ENCODE measurements at regions of chr12 and their contacts with region 1.

Region 1: DNA sequence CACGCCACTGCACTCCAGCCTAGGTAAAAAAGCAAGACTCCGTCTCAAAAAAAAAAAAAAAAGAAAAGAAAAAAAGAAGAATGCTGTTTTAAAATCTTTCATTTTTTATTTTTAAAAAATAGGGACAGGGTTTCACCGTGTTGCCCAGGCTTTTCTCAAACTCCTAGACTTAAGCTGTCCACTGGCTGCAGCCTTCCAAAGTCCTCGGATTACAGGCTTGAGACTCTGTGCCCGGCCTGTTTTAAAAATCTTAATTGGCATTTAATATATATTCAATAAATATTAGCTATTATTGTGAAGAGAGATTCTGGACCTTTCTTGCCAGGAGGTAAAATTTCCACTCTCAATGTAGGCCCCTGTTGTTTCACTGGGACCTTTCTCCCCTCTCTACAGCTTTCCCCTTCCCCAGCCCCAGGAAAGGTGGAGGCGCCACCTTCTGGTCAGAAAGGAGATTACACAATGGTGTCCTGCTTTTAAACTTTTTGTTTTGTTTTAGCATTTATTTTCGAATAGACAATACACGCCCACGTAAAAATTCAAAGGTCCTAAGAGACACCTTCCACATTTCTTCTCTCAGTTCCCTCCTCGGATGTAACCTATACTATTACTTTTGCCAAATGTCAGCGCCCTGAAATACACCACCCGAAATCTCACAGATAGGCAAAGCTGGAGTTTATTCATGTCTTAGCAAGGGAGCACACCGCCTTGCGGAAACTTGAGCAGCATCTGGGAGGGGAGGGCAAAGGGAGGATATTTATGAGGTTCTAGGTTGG is 23.8 kb upstream of the PHC1 start:
- DNase-seq: peak; percentile 70
- H3K4me3 Mint-ChIP-seq: peak overlapping the region; percentile 72
- H3K27ac Mint-ChIP-seq: no peak overlapping the region
- H3K4me1 Mint-ChIP-seq: peaks cover 4% of the 10 kb centered on the region
- H3K27me3 Mint-ChIP-seq: peaks cover 23% of the 10 kb centered on the region

Region 2: GRCh38 chr12:8544295-8544694 is 346.2 kb before region 1 on chr12:
- CTCF ChIA-PET with region 1: interaction called, 19 read pairs
- DNase-seq: peak; percentile 85
- H3K4me3 Mint-ChIP-seq: no peak overlapping the region
- H3K27ac Mint-ChIP-seq: no peak overlapping the region
- H3K4me1 Mint-ChIP-seq: peaks cover 10% of the 10 kb centered on the region
- H3K27me3 Mint-ChIP-seq: peaks cover 30% of the 10 kb centered on the region

Region 3: GRCh38 chr12:8658346-8658745 is 232.2 kb before region 1 on chr12:
- CTCF ChIA-PET with region 1: interaction called, 20 read pairs
- DNase-seq: no peak
- H3K4me3 Mint-ChIP-seq: no peak overlapping the region
- H3K27ac Mint-ChIP-seq: no peak overlapping the region
- H3K4me1 Mint-ChIP-seq: no peaks in the 10 kb centered on the region
- H3K27me3 Mint-ChIP-seq: peaks cover 29% of the 10 kb centered on the region

Region 4: DNA sequence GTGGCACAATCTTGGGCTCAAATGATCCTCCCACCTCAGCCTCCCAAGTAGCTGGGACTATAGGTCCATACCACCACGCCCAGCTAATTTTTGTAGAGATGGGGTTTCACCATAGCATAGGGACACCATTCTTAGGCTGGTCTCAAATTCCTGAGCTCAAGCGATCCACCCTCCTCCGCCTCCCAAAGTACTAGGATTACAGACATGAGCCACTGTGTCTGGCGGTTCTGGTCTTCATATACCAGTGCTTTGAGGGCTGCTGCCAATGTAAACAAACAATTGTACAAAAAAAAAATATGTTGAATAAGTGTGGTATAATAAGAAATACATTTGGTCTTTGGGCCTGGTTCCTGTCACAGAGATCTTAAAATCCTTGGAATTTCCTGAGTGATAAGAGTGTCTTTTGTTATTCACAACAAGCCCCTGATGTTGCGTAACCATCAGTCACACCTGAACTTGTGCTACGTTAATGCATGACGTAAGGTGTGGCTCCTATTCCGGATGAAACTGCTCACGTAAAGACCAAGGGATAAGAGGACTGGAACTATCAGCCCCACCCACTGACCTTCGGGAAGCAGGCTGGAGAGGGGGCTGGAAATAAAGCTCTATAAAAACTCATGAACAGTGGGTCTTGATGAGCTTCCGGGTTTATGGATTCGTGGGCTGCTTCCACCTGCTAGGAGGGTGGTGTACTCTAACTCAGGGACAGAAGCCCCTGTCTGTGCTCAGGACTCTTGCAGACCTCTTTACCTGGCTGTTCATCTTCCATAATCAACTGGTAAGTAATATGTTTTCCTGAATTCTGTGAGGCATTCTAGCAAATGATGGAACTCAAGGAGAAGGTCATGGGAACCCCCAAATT is 209.2 kb before region 1 on chr12:
- CTCF ChIA-PET with region 1: interaction called, 26 read pairs
- DNase-seq: no peak
- H3K4me3 Mint-ChIP-seq: no peak overlapping the region
- H3K27ac Mint-ChIP-seq: no peak overlapping the region
- H3K4me1 Mint-ChIP-seq: peaks cover 4% of the 10 kb centered on the region
- H3K27me3 Mint-ChIP-seq: peaks cover 13% of the 10 kb centered on the region

Region 5: GRCh38 chr12:8860165-8860961 is 30.1 kb before region 1 on chr12:
- CTCF ChIA-PET with region 1: interaction called, 14 read pairs
- DNase-seq: peak; percentile 51
- H3K4me3 Mint-ChIP-seq: no peak overlapping the region
- H3K27ac Mint-ChIP-seq: no peak overlapping the region
- H3K4me1 Mint-ChIP-seq: no peaks in the 10 kb centered on the region
- H3K27me3 Mint-ChIP-seq: peaks cover 4% of the 10 kb centered on the region

Region 6: DNA sequence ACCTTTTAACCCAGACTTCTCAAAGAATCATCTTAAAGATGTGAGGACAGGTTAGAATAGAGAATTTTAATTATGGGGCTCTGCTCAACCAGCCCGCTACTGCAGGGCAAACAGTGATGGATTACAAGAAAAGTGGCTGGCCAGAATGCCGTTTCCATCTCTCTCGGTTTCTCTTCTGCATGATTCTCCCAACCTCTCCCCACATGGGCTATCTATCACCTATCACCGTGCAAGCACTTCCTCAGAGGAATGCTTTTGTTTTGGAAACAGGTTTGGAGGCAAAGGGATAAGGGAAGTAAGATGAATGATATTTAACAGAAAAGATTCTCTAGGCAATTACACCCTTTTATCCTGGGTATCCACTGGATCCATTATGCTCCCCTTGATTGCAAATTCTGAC is 13.6 kb before region 1 on chr12:
- CTCF ChIA-PET with region 1: interaction called, 19 read pairs
- DNase-seq: no peak
- H3K4me3 Mint-ChIP-seq: no peak overlapping the region
- H3K27ac Mint-ChIP-seq: no peak overlapping the region
- H3K4me1 Mint-ChIP-seq: peaks cover 10% of the 10 kb centered on the region
- H3K27me3 Mint-ChIP-seq: peaks cover 5% of the 10 kb centered on the region

Region 7: DNA sequence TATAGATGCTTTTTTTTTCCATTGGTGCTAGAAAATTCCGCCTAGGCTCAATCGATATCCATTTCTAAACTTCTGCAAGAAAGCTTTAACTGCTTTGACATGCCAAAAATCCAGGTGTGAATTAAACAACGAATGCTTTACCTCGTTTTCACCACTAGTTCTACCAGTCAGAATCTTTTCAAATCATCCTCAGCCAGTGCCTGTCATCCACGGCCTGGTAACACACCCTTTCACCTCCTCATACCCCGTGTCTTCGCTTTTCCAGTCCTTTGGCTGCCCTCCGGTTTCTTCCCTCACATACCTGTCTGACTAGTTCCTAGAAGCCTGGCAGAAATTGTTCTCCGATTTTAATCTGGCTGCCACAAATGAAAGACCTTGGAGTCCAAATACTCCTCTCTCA is 22.4 kb after region 1 on chr12:
- CTCF ChIA-PET with region 1: no interaction called
- DNase-seq: no peak
- H3K4me3 Mint-ChIP-seq: peak overlapping the region; percentile 42
- H3K27ac Mint-ChIP-seq: no peak overlapping the region
- H3K4me1 Mint-ChIP-seq: peaks cover 13% of the 10 kb centered on the region
- H3K27me3 Mint-ChIP-seq: peaks cover 5% of the 10 kb centered on the region